B cell (primary cell): ENCODE measurements at regions of chr14 and their contacts with region 1.

Region 1: DNA sequence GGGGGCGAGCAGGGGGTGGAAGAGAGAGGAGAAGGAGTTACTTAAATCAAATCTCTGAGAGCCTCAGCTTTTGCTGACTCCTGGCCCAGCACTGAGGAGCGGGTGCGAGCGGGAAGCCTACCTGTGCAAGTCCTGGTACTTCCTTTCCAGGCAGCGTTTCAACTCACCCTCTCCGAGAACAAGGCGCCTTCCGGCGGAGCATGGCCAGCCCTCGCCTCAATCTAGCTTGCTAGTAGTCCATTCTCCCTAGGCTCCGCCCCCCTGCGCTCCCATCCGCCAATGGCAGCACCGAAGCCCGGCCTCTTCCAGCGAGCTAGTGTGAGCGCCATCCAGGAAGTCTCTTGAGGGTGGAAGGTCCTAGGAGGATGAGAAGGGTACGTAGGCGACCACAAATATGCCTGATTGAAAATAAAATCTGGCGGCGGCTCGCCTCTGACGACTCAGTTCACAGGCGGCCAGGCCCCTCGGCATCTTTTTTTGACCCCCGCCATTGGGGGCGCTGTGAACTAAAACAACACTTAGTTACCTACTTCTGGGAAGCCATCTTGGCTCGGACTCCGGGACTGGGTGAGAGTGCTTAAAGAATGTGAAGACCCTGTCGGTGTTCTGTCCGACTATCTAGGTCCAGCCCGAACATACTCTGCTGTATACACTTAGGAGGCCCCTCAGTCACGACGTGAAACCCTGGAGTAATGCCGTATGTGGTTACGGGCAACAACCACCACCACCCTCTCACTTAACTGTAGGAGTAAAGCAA is at the start of gene CHD8:
- DNase-seq: peak; percentile 100
- ATAC-seq: peak; percentile 98
- H3K4me3 ChIP-seq: peak within 1 kb of the TSS; percentile 69 to 98 (median 94)
- H3K4me3 Mint-ChIP-seq: peak within 1 kb of the TSS; percentile 100
- H3K27ac ChIP-seq: peak within 1 kb of the TSS; percentile 89 to 93
- H3K27ac Mint-ChIP-seq: peak within 1 kb of the TSS; percentile 100
- H3K4me1 ChIP-seq: peaks cover 11 to 17% of the 10 kb centered on the region in 2 donors
- H3K4me1 Mint-ChIP-seq: peaks cover 36% of the 10 kb centered on the region
- H3K27me3 ChIP-seq: no peaks in the 10 kb centered on the region
- H3K27me3 Mint-ChIP-seq: no peaks in the 10 kb centered on the region
- CTCF ChIP-seq: peak; percentile 74
- total RNA-seq, gene CHD8: 155 and 157 TPM in 2 replicates

Region 2: DNA sequence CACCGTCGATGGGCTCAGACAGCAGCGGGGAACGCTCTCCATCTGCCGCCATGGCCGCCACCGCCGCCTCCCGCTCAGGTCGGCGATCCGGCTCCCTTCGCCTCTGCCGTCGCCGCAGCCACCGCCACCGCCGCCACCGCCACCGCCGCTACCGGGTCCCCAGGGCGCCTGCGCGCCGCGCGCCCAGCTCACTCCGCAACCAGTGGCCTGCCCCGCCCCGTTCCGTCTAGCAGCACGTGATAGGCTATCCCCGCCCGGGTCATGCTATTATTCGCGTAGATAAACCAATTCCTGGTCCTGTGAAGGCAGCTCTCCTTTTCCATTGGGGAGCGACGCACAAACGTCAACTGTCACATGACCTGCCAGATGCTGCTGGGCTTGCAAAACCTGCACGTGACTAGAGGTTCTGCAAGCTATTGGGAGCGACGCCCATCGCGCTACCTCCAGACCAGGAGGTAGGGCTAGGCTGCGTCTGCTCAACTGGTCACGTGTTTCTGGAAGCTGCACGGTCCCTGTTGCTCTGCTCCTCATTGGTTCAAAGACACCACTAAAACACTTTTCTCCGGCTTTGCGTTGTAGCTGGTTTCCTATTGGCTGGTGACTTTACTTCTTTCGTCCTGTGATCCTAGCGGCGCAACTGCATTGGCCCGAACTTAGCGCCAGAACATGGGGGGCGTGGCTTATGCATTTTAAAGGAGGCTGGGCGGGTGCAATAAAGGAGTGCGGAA is 994.7 kb before region 1 on chr14 and contains the start of gene PIP4P1:
- CTCF ChIA-PET with region 1: no interaction called
- POLR2A ChIA-PET with region 1: no interaction called
- intact Hi-C with region 1: loop called (anchors 10 kb)
- DNase-seq: peak; percentile 100
- ATAC-seq: peak; percentile 84
- H3K4me3 ChIP-seq: peak within 1 kb of the TSS; percentile 75 to 90 (median 83)
- H3K4me3 Mint-ChIP-seq: peak within 1 kb of the TSS; percentile 94
- H3K27ac ChIP-seq: peak within 1 kb of the TSS; percentile 98
- H3K27ac Mint-ChIP-seq: peak within 1 kb of the TSS; percentile 98
- H3K4me1 ChIP-seq: peaks cover 33 to 59% of the 10 kb centered on the region in 2 donors
- H3K4me1 Mint-ChIP-seq: peaks cover 45% of the 10 kb centered on the region
- H3K27me3 ChIP-seq: no peaks in the 10 kb centered on the region
- H3K27me3 Mint-ChIP-seq: no peaks in the 10 kb centered on the region
- CTCF ChIP-seq: no peak
- total RNA-seq, gene PIP4P1: 97.5 and 101 TPM in 2 replicates

Region 3: GRCh38 chr14:21103710-21104447 is 352.2 kb before region 1 on chr14:
- CTCF ChIA-PET with region 1: no interaction called
- POLR2A ChIA-PET with region 1: no interaction called
- intact Hi-C with region 1: loop called (anchors 1 kb)
- DNase-seq: peak; percentile 97
- ATAC-seq: peak; percentile 86
- H3K4me3 ChIP-seq: peak overlapping the region; percentile 72 to 92 (median 84)
- H3K4me3 Mint-ChIP-seq: peak overlapping the region; percentile 78
- H3K27ac ChIP-seq: peak overlapping the region; percentile 93 to 96
- H3K27ac Mint-ChIP-seq: peak overlapping the region; percentile 96
- H3K4me1 ChIP-seq: peaks cover 17 to 25% of the 10 kb centered on the region in 2 donors
- H3K4me1 Mint-ChIP-seq: peaks cover 15% of the 10 kb centered on the region
- H3K27me3 ChIP-seq: peaks cover 0 to 25% (median 15%) of the 10 kb centered on the region in 4 experiments
- H3K27me3 Mint-ChIP-seq: peaks cover 26% of the 10 kb centered on the region
- CTCF ChIP-seq: peak; percentile 76

Region 4: GRCh38 chr14:21269252-21270046 is 186.6 kb before region 1 on chr14 and contains the start of gene HNRNPC:
- CTCF ChIA-PET with region 1: interaction called, 3 read pairs
- POLR2A ChIA-PET with region 1: no interaction called
- intact Hi-C with region 1: loop called (anchors 1 kb)
- DNase-seq: peak; percentile 100
- ATAC-seq: peak; percentile 83
- H3K4me3 ChIP-seq: peak within 1 kb of the TSS; percentile 67 to 100 (median 99)
- H3K4me3 Mint-ChIP-seq: peak within 1 kb of the TSS; percentile 98
- H3K27ac ChIP-seq: peak within 1 kb of the TSS; percentile 91 to 92
- H3K27ac Mint-ChIP-seq: peak within 1 kb of the TSS; percentile 99
- H3K4me1 ChIP-seq: peaks cover 37 to 48% of the 10 kb centered on the region in 2 donors
- H3K4me1 Mint-ChIP-seq: peaks cover 40% of the 10 kb centered on the region
- H3K27me3 ChIP-seq: no peaks in the 10 kb centered on the region
- H3K27me3 Mint-ChIP-seq: no peaks in the 10 kb centered on the region
- CTCF ChIP-seq: no peak
- total RNA-seq, gene HNRNPC: 496 and 497 TPM in 2 replicates

Region 5: DNA sequence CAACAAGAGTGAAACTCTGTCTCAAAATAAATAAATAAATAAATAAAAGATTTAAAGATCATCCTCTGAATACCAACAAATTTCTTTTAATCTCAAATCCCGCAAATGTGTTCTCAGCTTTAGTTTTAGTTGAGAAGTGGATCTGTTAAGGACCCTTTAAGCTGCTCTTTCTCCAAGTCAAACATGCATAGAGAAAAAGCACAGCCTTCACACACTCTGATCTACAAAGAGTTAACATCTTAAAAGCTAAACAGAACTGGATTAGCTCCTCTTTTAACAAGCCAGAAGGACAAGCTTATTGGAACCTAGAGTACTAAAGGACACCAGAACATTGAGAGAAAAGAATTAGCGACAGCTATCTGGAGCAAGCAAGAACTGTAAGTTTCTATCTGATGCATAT is 176.3 kb before region 1 on chr14 and contains the start of gene RPGRIP1:
- CTCF ChIA-PET with region 1: no interaction called
- POLR2A ChIA-PET with region 1: no interaction called
- intact Hi-C with region 1: no loop called
- DNase-seq: no peak
- ATAC-seq: no peak
- H3K4me3 ChIP-seq: no peak within 1 kb of the TSS
- H3K4me3 Mint-ChIP-seq: no peak within 1 kb of the TSS
- H3K27ac ChIP-seq: no peak within 1 kb of the TSS
- H3K27ac Mint-ChIP-seq: no peak within 1 kb of the TSS
- H3K4me1 ChIP-seq: no peaks in the 10 kb centered on the region
- H3K4me1 Mint-ChIP-seq: peaks cover 2% of the 10 kb centered on the region
- H3K27me3 ChIP-seq: no peaks in the 10 kb centered on the region
- H3K27me3 Mint-ChIP-seq: no peaks in the 10 kb centered on the region
- CTCF ChIP-seq: no peak
- total RNA-seq, gene RPGRIP1: 0.86 and 0.87 TPM in 2 replicates

Region 6: DNA sequence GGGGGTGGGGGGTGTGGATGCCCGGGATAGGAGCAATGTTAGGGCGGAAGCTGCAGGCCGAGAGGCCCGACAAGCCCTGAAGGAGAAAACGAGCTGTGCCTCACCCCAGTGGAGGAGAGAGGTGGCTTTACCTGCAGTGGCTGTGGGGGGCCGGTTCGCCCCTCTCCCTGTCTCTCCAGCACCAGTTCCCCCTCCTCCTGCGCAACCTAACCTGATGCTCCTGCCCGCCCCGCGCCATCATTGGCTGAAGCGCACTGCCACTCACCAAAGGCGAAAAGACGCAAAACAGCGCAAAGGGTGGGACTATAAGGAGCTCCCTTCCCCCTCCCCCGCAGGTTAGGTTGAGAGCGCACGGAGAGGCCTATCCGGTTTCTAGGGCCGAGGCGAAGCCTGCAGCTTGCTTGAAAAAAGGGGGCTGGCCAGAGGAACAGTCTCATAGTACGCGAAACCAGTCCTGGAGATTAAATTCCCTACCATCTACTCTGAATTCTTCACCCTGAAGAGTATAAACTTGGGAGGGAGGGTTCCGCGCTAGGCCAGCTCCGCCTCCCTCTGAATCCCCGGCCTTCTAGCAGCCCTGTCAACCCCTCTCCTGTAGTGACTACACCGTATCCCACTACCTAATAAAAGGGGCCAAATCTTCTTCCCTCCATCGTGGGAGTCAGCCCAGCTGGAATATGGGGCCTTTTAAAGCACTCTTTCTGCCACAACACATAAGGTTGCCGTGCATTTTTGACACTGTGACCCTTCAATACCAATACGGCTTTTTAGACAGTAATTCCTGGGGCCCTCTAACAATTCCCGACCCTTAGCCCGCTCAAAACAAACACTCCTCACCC is 18.8 kb before region 1 on chr14:
- CTCF ChIA-PET with region 1: interaction called, 50 read pairs
- POLR2A ChIA-PET with region 1: interaction called, 53 read pairs
- intact Hi-C with region 1: loop called (anchors 1 kb)
- DNase-seq: peak; percentile 99
- ATAC-seq: peak; percentile 100
- H3K4me3 ChIP-seq: peak overlapping the region; percentile 79 to 96 (median 89)
- H3K4me3 Mint-ChIP-seq: peak overlapping the region; percentile 90
- H3K27ac ChIP-seq: peak overlapping the region; percentile 76 to 93
- H3K27ac Mint-ChIP-seq: peak overlapping the region; percentile 90
- H3K4me1 ChIP-seq: peaks cover 12 to 25% of the 10 kb centered on the region in 2 donors
- H3K4me1 Mint-ChIP-seq: peaks cover 53% of the 10 kb centered on the region
- H3K27me3 ChIP-seq: no peaks in the 10 kb centered on the region
- H3K27me3 Mint-ChIP-seq: no peaks in the 10 kb centered on the region
- CTCF ChIP-seq: no peak

Region 7: GRCh38 chr14:21467616-21468015 is 11.5 kb after region 1 on chr14:
- CTCF ChIA-PET with region 1: interaction called, 14 read pairs
- POLR2A ChIA-PET with region 1: interaction called, 11 read pairs
- intact Hi-C with region 1: no loop called
- DNase-seq: no peak
- ATAC-seq: no peak
- H3K4me3 ChIP-seq: no peak overlapping the region
- H3K4me3 Mint-ChIP-seq: no peak overlapping the region
- H3K27ac ChIP-seq: no peak overlapping the region
- H3K27ac Mint-ChIP-seq: no peak overlapping the region
- H3K4me1 ChIP-seq: no peaks in the 10 kb centered on the region
- H3K4me1 Mint-ChIP-seq: peaks cover 2% of the 10 kb centered on the region
- H3K27me3 ChIP-seq: no peaks in the 10 kb centered on the region
- H3K27me3 Mint-ChIP-seq: no peaks in the 10 kb centered on the region
- CTCF ChIP-seq: no peak

Region 8: DNA sequence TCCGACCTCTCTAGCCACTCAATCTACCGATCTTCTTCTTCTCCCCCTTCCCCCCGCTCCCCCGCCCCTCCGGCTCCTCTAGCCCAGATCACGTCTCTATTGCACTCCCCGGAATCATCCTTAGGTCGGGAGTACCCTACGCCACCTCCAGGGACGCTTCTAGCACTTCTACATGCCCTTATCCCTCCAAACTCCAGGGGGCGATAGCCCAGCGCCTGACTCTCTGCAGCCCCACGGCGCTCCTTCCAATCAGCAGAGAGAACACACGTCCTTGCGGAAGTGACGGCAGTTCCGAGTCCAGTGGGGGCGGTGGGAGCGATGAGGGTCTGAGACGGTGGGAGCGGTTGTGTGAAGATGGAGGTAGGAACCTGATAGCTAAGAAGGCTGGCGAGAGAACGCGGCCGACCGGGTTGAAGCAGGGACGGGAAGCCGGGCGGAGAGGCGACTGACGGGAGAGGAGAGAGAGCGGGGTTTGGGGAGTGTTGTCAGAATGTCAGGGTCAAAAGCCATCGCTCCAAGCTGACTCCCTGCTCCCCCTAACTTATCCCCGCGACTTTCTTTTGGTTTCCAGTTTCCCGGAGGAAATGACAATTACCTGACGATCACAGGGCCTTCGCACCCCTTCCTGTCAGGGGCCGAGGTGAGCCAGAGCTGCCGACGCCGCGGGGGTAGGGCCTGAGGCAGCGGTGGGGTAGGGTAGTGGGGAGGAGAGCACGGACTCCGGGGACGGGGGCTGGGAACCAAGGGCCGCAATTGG is 21.0 kb after region 1 on chr14 and contains the starts of genes RAB2B and TOX4:
- CTCF ChIA-PET with region 1: interaction called, 25 read pairs
- POLR2A ChIA-PET with region 1: interaction called, 21 read pairs
- intact Hi-C with region 1: loop called (anchors 1 kb)
- DNase-seq: peak; percentile 98
- ATAC-seq: peak; percentile 98
- H3K4me3 ChIP-seq: peak within 1 kb of the TSS; percentile 77 to 99 (median 83)
- H3K4me3 Mint-ChIP-seq: peak within 1 kb of the TSS; percentile 98
- H3K27ac ChIP-seq: peak within 1 kb of the TSS; percentile 70 to 94
- H3K27ac Mint-ChIP-seq: peak within 1 kb of the TSS; percentile 94
- H3K4me1 ChIP-seq: peaks cover 15 to 21% of the 10 kb centered on the region in 2 donors
- H3K4me1 Mint-ChIP-seq: peaks cover 33% of the 10 kb centered on the region
- H3K27me3 ChIP-seq: no peaks in the 10 kb centered on the region
- H3K27me3 Mint-ChIP-seq: no peaks in the 10 kb centered on the region
- CTCF ChIP-seq: peak; percentile 88
- total RNA-seq, gene RAB2B: 46.5 and 46.8 TPM in 2 replicates
- total RNA-seq, gene TOX4: 74.1 and 83.2 TPM in 2 replicates